ENCODE measurements at regions of chr4 and their contacts with region 1.

Region 1: GRCh38 chr4:38902695-38903094 is 35.1 kb downstream of the FAM114A1 start:
- DNase-seq: no peak
- H3K4me3 ChIP-seq: no peak overlapping the region
- H3K27ac ChIP-seq: no peak overlapping the region
- H3K4me1 ChIP-seq: peaks cover 23% of the 10 kb centered on the region
- H3K27me3 ChIP-seq: no peaks in the 10 kb centered on the region
- CTCF ChIP-seq: peak; percentile 51

Region 2: GRCh38 chr4:39134683-39135319 is 232.1 kb after region 1 on chr4:
- intact Hi-C with region 1: loop called (anchors 5 kb)
- DNase-seq: no peak
- H3K4me3 ChIP-seq: no peak overlapping the region
- H3K27ac ChIP-seq: no peak overlapping the region
- H3K4me1 ChIP-seq: peaks cover 8% of the 10 kb centered on the region
- H3K27me3 ChIP-seq: no peaks in the 10 kb centered on the region
- CTCF ChIP-seq: no peak